GM12878 (cell line): ENCODE measurements at regions of chr7 and their contacts with region 1.

Region 1: DNA sequence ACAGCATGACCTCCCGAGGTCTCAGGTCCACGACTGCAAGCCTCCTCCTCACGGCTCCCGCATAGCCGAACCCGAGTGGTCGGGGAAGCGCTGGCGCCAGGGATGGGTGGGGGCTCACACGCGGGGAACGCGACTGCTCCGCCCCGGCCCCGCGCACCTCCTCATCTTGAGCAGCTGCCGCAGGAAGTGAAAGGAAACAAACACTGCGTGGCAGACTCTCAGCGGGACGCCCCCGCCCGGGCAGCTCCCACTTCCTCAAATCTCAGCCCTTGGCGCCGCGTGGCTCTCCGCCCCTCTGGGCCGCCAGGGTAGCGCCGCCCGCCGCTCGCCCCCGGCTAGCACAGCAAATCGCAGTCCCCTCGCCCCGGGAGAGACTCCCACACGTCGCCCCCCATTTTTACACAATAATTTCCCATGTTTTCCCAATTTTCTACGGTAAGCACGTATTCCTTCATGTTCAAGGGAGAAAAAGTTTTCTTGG is at the start of gene TMEM243:
- DNase-seq: peak; percentile 45
- ATAC-seq: peak; percentile 69
- H3K4me3 ChIP-seq: peak within 1 kb of the TSS; percentile 95
- H3K27ac ChIP-seq: peak within 1 kb of the TSS; percentile 98
- H3K4me1 ChIP-seq: peaks cover 8% of the 10 kb centered on the region
- H3K27me3 ChIP-seq: no peaks in the 10 kb centered on the region
- CTCF ChIP-seq: peak; percentile 28 to 42 (median 34); a peak in 5 of 6 replicates
- EP300 ChIP-seq: peak in 1 of 2 experiments; percentile 73; a peak in 2 of 4 replicates
- POLR2A ChIP-seq: peak; percentile 90
- RAD21 ChIP-seq: peak; percentile 29; the same call in 1 of the 2 replicates
- polyA plus RNA-seq, gene TMEM243: 47.8 to 70.9 TPM

Region 2: GRCh38 chr7:87159538-87159937 is 60.0 kb before region 1 on chr7:
- CTCF ChIA-PET with region 1: interaction called, 13 read pairs
- POLR2A ChIA-PET with region 1: interaction called, 215 read pairs
- RAD21 ChIA-PET with region 1: interaction called, 153 read pairs
- SMC1A ChIA-PET with region 1: interaction called, 112 read pairs
- in situ Hi-C with region 1: no loop called
- intact Hi-C with region 1: no loop called
- DNase-seq: no peak
- ATAC-seq: peak; percentile 67
- H3K4me3 ChIP-seq: peak overlapping the region; percentile 29; the same call in 1 of the 2 replicates
- H3K27ac ChIP-seq: no peak overlapping the region; the same call in 1 of the 2 replicates
- H3K4me1 ChIP-seq: peaks cover 6% of the 10 kb centered on the region; the same call in 1 of the 2 replicates
- H3K27me3 ChIP-seq: no peaks in the 10 kb centered on the region
- CTCF ChIP-seq: no peak
- EP300 ChIP-seq: no peak
- POLR2A ChIP-seq: no peak
- RAD21 ChIP-seq: no peak

Region 3: GRCh38 chr7:87199700-87200450 is 19.7 kb before region 1 on chr7:
- CTCF ChIA-PET with region 1: interaction called, 19 read pairs
- POLR2A ChIA-PET with region 1: interaction called, 11 read pairs
- RAD21 ChIA-PET with region 1: interaction called, 6 read pairs
- SMC1A ChIA-PET with region 1: interaction called, 66 read pairs
- in situ Hi-C with region 1: no loop called
- intact Hi-C with region 1: no loop called
- DNase-seq: no peak
- ATAC-seq: peak; percentile 21
- H3K4me3 ChIP-seq: no peak overlapping the region
- H3K27ac ChIP-seq: no peak overlapping the region; the same call in 1 of the 2 replicates
- H3K4me1 ChIP-seq: peaks cover 8% of the 10 kb centered on the region
- H3K27me3 ChIP-seq: no peaks in the 10 kb centered on the region
- CTCF ChIP-seq: no peak
- EP300 ChIP-seq: no peak
- POLR2A ChIP-seq: peak; percentile 52; the same call in 1 of the 2 replicates
- RAD21 ChIP-seq: no peak

Region 4: GRCh38 chr7:87474533-87475358 is 255.2 kb after region 1 on chr7:
- CTCF ChIA-PET with region 1: no interaction called
- POLR2A ChIA-PET with region 1: interaction called, 3 read pairs
- RAD21 ChIA-PET with region 1: interaction called, 4 read pairs
- SMC1A ChIA-PET with region 1: interaction called, 5 read pairs
- in situ Hi-C with region 1: no loop called
- intact Hi-C with region 1: loop called (anchors 1 kb)
- DNase-seq: peak; percentile 96
- ATAC-seq: peak; percentile 80
- H3K4me3 ChIP-seq: peak overlapping the region; percentile 77
- H3K27ac ChIP-seq: peak overlapping the region; percentile 72
- H3K4me1 ChIP-seq: peaks cover 12% of the 10 kb centered on the region
- H3K27me3 ChIP-seq: no peaks in the 10 kb centered on the region
- CTCF ChIP-seq: no peak
- EP300 ChIP-seq: peak; percentile 87 to 88
- POLR2A ChIP-seq: 0 out of 2 replicates have a peak, but pooled peaks have one; percentile 18
- RAD21 ChIP-seq: 0 out of 2 replicates have a peak, but pooled peaks have one; percentile 1

Region 5: GRCh38 chr7:88219781-88220747 is 1000.5 kb after region 1 on chr7 and contains the start of gene SRI:
- CTCF ChIA-PET with region 1: no interaction called
- POLR2A ChIA-PET with region 1: no interaction called
- RAD21 ChIA-PET with region 1: no interaction called
- SMC1A ChIA-PET with region 1: interaction called, 3 read pairs
- in situ Hi-C with region 1: no loop called
- intact Hi-C with region 1: loop called (anchors 5 kb)
- DNase-seq: peak; percentile 40
- ATAC-seq: peak; percentile 83
- H3K4me3 ChIP-seq: peak within 1 kb of the TSS; percentile 80
- H3K27ac ChIP-seq: peak within 1 kb of the TSS; percentile 74
- H3K4me1 ChIP-seq: no peaks in the 10 kb centered on the region
- H3K27me3 ChIP-seq: no peaks in the 10 kb centered on the region
- CTCF ChIP-seq: peak; percentile 43 to 73 (median 70); a peak in 5 of 6 replicates
- EP300 ChIP-seq: no peak
- POLR2A ChIP-seq: peak; percentile 95
- RAD21 ChIP-seq: no peak
- polyA plus RNA-seq, gene SRI: 174 to 259 TPM